ENCODE measurements at regions of chr3 and their contacts with region 1.

Region 1: GRCh38 chr3:179653096-179653797 is 407 bp downstream of the USP13 start:
- DNase-seq: peak; percentile 58 to 96 (median 75)

Region 2: GRCh38 chr3:179355996-179356395 is 297.3 kb before region 1 on chr3:
- intact Hi-C with region 1: no loop called
- DNase-seq: no peak

Region 3: DNA sequence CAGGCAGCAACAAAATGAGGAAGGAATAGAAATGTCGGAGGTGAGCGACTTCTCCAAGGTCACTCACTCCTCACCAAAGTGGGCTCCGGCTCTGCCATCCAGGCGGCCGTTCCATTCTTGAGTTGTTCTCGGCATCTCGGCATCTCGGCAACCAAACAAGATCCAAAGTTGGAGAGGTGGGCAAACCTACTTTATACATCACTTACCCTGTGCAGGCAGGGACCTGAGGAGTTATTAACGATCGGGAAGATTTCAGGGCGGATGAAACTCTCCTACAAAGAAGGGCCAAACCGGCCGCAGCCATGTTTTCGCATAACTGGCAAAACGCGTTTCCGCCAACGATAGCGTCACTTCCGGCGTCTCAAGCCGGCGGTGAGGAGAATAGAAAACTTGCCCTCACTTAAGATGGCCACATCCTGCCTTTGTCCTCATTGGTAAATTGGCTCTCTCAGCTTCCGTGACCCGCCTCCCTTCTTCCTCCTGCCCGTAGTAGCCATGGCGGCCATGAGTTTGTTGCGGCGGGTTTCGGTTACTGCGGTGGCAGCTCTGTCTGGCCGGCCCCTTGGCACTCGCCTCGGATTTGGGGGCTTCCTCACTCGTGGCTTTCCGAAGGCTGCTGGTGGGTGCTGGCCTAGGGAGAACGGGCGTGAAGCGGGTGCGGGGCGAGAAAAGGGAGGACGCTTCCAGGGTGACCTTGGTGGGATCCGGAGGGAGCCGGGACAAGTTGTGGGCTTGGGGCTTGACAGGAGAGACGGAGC is 48.7 kb before region 1 on chr3 and contains the starts of genes MRPL47 and NDUFB5:
- intact Hi-C with region 1: loop called (anchors 1 kb)
- DNase-seq: peak; percentile 92 to 99 (median 96)

Region 4: GRCh38 chr3:179630753-179631451 is 22.3 kb before region 1 on chr3:
- intact Hi-C with region 1: no loop called
- DNase-seq: no peak